ENCODE measurements at regions of chr2 and their contacts with region 1.

Region 1: DNA sequence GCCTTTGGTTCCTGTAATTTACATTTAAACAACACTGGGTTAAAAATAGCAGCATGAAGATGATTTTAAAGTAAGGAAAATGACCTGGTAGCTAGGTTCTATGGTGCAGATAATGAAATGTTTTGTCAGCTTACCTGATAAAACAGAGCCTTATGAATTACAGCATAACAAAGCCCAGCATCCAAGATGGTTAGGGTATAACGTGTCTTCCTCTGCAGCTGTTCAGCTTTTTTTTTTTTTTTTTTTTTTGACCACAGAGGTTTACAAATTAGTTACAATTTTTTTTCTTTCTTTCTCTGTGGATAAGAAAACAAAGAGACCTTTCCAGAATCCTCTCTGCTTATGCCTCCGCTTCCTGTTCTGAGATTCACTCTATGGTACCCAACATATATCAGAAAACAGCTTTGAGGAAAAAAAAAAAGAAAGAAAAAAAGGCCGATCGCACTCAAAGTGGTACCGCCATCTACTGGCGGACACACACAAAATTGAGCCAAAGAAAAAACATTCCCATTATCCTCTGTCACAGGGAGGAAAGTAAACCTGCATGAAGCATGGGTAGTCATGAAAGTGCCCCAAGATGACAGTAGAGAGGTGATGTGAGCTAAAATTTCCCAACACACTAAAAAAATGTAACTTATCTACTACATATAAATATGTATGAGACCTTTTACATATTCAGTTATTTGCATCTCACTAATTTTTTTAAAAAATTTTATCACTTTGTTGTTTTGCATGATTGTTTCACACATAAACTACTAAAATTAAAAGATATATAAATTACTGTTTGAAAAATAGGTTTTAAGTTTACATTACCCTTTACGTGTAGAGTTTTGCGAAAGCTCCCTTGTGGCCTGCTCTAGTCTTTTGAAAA is at the start of gene SCN3A:
- DNase-seq: peak; percentile 49
- H3K4me3 Mint-ChIP-seq: no peak within 1 kb of the TSS
- H3K27ac Mint-ChIP-seq: no peak within 1 kb of the TSS
- H3K4me1 Mint-ChIP-seq: peaks cover 12% of the 10 kb centered on the region
- H3K27me3 Mint-ChIP-seq: no peaks in the 10 kb centered on the region
- CTCF ChIP-seq: peak; percentile 61
- total RNA-seq, gene SCN3A: 0.09 and 1.3 TPM in 2 replicates

Region 2: GRCh38 chr2:164737612-164738081 is 466.3 kb before region 1 on chr2:
- CTCF ChIA-PET with region 1: no interaction called
- intact Hi-C with region 1: loop called (anchors 10 kb)
- DNase-seq: peak; percentile 63
- H3K4me3 Mint-ChIP-seq: no peak overlapping the region
- H3K27ac Mint-ChIP-seq: peak overlapping the region; percentile 26
- H3K4me1 Mint-ChIP-seq: peaks cover 68% of the 10 kb centered on the region
- H3K27me3 Mint-ChIP-seq: no peaks in the 10 kb centered on the region
- CTCF ChIP-seq: peak; percentile 77

Region 3: DNA sequence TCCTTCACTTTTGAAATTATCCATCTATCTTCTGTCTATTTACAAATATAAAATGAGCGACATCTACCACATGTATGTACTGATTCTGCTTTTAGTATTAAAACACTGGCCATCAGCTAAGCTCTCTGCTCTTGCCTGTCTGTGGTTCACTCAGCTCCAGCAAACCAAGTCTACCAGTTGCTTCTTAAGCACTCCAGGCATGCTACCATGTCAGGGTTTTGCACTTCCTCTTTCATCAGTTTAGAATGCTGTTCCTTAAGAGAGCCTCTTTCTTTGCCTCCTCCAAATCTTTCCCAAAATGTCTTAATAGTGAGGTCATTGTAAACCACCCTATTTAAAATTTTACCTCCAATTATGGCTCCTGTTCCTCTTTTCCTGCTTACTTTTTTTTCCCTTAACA is 59.6 kb before region 1 on chr2:
- CTCF ChIA-PET with region 1: interaction called, 4 read pairs
- intact Hi-C with region 1: loop called (anchors 2 kb)
- DNase-seq: no peak
- H3K4me3 Mint-ChIP-seq: no peak overlapping the region
- H3K27ac Mint-ChIP-seq: no peak overlapping the region
- H3K4me1 Mint-ChIP-seq: peaks cover 6% of the 10 kb centered on the region
- H3K27me3 Mint-ChIP-seq: no peaks in the 10 kb centered on the region
- CTCF ChIP-seq: no peak